A549 (cell line): ENCODE measurements at regions of chr17 and their contacts with region 1.

Region 1: DNA sequence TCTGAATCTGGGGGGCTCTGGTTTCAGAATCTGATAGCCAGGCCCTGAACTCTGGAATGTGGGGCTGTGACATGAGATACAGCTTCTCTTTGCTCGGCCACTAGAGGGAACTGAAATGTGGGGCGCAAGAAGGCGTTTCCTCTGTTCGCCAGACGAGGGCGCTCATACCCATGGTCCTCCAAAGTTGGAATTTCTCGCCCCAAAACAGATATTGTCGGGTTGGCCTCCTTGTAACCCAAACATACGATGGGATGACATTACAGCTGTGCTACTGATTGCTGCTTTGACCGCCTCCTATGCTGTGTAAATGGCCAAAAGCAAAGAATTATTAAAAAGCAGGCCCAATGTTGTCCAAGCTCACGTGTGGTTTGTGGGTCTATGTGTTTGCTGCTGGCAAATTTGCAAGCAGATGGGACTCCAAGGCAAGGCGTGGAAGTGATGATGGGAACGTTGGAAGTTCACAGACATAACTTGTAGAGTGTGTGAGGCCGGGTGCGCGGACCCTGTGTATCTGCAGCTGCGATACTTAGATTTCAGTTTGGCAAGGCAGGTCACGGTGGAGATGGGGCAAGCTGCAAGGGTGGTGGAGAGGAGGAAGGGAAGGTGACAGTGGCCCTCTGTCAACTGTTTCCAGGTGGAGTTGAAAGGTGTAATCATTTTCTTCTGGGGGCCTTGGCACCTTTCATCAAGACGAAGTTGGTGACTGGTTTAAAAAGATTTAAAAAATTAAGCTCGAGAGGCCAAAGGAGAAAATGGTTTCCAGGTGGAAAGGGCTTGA is 13.0 kb upstream of the MSI2 start:
- DNase-seq: peak; percentile 77 to 88
- ATAC-seq: peak; percentile 83 to 95
- H3K4me3 ChIP-seq: no peak overlapping the region
- H3K27ac ChIP-seq: peak overlapping the region; percentile 15 to 47; a peak in 3 of 6 replicates
- H3K4me1 ChIP-seq: peaks cover 8% of the 10 kb centered on the region; the same call in 1 of the 3 replicates
- CTCF ChIP-seq: peak; percentile 100
- EP300 ChIP-seq: no peak
- POLR2A ChIP-seq: no peak
- RAD21 ChIP-seq: peak; percentile 99

Region 2: GRCh38 chr17:56880133-56880532 is 363.2 kb before region 1 on chr17:
- CTCF ChIA-PET with region 1: no interaction called
- POLR2A ChIA-PET with region 1: no interaction called
- DNase-seq: no peak
- ATAC-seq: no peak; a peak in 1 of 6 replicates
- H3K4me3 ChIP-seq: no peak overlapping the region
- H3K27ac ChIP-seq: no peak overlapping the region
- H3K4me1 ChIP-seq: no peaks in the 10 kb centered on the region
- CTCF ChIP-seq: no peak
- EP300 ChIP-seq: no peak
- POLR2A ChIP-seq: no peak
- RAD21 ChIP-seq: no peak

Region 3: DNA sequence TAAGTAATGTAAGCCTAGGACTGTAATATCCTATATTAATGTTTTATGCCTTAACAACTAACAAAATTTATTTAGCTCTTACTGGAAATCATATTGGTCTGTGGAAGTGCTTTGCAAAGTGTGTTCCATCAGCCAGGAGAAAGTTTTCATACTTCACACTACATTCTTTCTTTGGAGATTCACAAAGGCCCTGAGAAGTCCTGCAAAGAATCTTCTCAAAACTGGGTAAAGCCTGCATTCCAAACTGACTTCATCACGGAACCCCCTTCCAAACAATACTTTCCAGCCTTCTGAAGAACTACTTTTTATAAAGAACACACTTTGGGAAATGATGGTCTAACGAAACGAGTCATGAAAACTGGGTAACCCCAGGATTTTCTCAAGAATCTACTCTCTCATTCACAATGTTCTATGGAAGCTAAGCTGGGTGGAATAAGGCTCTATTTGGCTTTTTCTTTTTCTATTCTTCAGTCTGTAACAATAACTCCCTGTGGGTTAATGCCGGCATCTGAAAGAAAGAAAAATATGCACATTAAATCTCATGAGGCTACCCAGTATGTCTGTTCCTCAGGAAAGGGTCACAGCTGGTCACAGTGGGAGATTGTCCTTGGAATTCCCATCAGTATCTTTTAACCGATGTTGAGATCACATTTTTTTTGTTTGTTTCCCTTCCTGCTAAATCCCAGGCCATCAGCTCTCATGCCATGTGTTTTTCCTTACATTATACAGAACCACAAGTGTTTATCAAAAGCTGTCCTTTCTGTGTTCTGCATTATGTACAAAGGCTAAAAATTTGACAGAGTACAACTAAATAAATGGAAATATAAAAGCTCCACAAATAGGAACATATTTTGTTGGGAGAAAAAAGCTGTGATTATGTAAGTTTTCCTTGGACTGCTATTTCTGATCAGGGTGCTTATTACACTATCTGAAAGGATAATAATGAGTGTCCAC is 171.1 kb before region 1 on chr17:
- CTCF ChIA-PET with region 1: no interaction called
- POLR2A ChIA-PET with region 1: no interaction called
- DNase-seq: no peak
- ATAC-seq: no peak
- H3K4me3 ChIP-seq: no peak overlapping the region
- H3K27ac ChIP-seq: no peak overlapping the region
- H3K4me1 ChIP-seq: no peaks in the 10 kb centered on the region
- CTCF ChIP-seq: no peak
- EP300 ChIP-seq: no peak
- POLR2A ChIP-seq: no peak
- RAD21 ChIP-seq: no peak

Region 4: DNA sequence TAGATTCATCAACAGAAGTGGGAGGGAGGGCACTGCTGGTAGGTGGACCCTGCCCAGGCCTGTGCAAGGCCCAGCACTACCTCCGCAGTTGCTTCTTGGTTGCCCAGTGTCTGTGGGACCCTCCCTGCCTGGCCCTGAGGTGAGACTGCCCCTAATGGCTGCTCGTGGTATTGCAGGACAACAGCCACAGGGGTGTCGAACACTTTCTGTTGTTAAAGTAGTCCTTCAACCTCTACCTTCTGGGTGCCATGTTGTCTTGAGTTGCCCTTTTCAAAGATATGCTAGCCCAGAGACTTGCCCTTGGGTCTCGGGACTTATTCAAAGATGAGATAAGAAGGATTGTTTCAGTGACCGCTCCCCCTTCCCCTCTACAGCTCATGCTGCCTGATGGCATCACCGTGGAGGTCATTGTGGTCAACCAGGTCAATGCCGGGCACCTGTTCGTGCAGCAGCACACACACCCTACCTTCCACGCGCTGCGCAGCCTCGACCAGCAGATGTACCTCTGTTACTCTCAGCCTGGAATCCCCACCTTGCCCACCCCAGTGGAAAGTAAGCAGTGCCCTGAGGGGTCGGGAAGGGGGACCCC is 129.2 kb before region 1 on chr17:
- CTCF ChIA-PET with region 1: no interaction called
- POLR2A ChIA-PET with region 1: no interaction called
- DNase-seq: peak; percentile 57 to 76
- ATAC-seq: peak; percentile 40 to 87; a peak in 3 of 6 replicates
- H3K4me3 ChIP-seq: no peak overlapping the region
- H3K27ac ChIP-seq: no peak overlapping the region
- H3K4me1 ChIP-seq: 0 out of 3 replicates have a peak, but pooled peaks cover under 1% of the 10 kb centered on the region
- CTCF ChIP-seq: peak; percentile 65
- EP300 ChIP-seq: no peak
- POLR2A ChIP-seq: no peak
- RAD21 ChIP-seq: peak; percentile 59 to 74

Region 5: GRCh38 chr17:57255776-57256681 is 12.7 kb after region 1 on chr17 and contains the start of gene MSI2:
- CTCF ChIA-PET with region 1: interaction called, 61 read pairs
- POLR2A ChIA-PET with region 1: no interaction called
- DNase-seq: peak; percentile 68 to 90
- ATAC-seq: peak; percentile 88 to 89
- H3K4me3 ChIP-seq: peak within 1 kb of the TSS; percentile 94
- H3K27ac ChIP-seq: peak within 1 kb of the TSS; percentile 94 to 95
- H3K4me1 ChIP-seq: peaks cover 26% of the 10 kb centered on the region; the same call in 2 of the 3 replicates
- CTCF ChIP-seq: no peak
- EP300 ChIP-seq: peak in 1 of 2 experiments; percentile 39; a peak in 3 of 5 replicates
- POLR2A ChIP-seq: peak; percentile 27; the same call in 1 of the 2 replicates
- RAD21 ChIP-seq: no peak
- polyA plus RNA-seq, gene MSI2: 44.4 and 47.5 TPM in 2 replicates

Region 6: DNA sequence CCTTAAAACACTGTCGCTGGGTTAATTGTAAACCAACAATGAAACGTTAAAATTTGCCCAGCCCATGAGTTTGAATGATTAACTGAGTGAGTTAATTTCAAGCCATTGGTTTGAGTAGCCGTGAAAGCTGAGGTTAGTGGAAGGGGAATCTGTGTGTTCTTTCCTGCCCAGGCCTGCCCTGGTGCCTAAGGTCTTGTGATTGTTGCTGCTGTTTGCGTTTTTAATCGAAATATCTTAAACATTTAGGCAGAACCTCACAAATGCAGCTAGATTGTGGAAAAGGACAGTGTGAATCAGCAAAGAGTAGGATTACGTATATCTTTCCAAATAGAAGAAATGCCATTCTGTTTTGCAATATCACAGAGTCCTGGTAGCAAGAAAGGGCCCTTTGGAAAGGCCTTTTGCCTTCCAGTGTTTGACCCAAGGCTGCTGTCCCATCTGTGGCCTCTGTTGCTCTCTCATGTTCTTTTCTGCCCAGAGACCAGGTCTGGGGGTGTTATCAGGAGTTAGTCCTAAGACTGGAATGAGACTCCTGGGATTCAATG is 126.7 kb after region 1 on chr17:
- CTCF ChIA-PET with region 1: interaction called, 33 read pairs
- POLR2A ChIA-PET with region 1: no interaction called
- DNase-seq: peak; percentile 81 to 91
- ATAC-seq: peak; percentile 82 to 83
- H3K4me3 ChIP-seq: no peak overlapping the region
- H3K27ac ChIP-seq: peak overlapping the region; percentile 88 to 91
- H3K4me1 ChIP-seq: peaks cover 80% of the 10 kb centered on the region
- CTCF ChIP-seq: no peak
- EP300 ChIP-seq: peak; percentile 92 to 93; a peak in 3 of 5 replicates
- POLR2A ChIP-seq: no peak
- RAD21 ChIP-seq: peak; percentile 31 to 67

Region 7: GRCh38 chr17:57440522-57441485 is 197.4 kb after region 1 on chr17:
- CTCF ChIA-PET with region 1: interaction called, 60 read pairs
- POLR2A ChIA-PET with region 1: no interaction called
- DNase-seq: peak; percentile 59 to 77
- ATAC-seq: peak; percentile 68 to 77
- H3K4me3 ChIP-seq: no peak overlapping the region
- H3K27ac ChIP-seq: peak overlapping the region; percentile 82 to 85
- H3K4me1 ChIP-seq: peaks cover 96% of the 10 kb centered on the region
- CTCF ChIP-seq: peak; percentile 47
- EP300 ChIP-seq: no peak
- POLR2A ChIP-seq: no peak
- RAD21 ChIP-seq: peak; percentile 59 to 60; a peak in 4 of 5 replicates

Region 8: GRCh38 chr17:57518587-57519581 is 275.5 kb after region 1 on chr17:
- CTCF ChIA-PET with region 1: interaction called, 16 read pairs
- POLR2A ChIA-PET with region 1: no interaction called
- DNase-seq: peak in 1 of 2 experiments; percentile 48
- ATAC-seq: peak in 1 of 2 experiments; percentile 57; a peak in 4 of 6 replicates
- H3K4me3 ChIP-seq: no peak overlapping the region
- H3K27ac ChIP-seq: peak overlapping the region; percentile 67 to 80
- H3K4me1 ChIP-seq: peaks cover 84% of the 10 kb centered on the region
- CTCF ChIP-seq: no peak
- EP300 ChIP-seq: no peak
- POLR2A ChIP-seq: no peak
- RAD21 ChIP-seq: no peak

Region 9: DNA sequence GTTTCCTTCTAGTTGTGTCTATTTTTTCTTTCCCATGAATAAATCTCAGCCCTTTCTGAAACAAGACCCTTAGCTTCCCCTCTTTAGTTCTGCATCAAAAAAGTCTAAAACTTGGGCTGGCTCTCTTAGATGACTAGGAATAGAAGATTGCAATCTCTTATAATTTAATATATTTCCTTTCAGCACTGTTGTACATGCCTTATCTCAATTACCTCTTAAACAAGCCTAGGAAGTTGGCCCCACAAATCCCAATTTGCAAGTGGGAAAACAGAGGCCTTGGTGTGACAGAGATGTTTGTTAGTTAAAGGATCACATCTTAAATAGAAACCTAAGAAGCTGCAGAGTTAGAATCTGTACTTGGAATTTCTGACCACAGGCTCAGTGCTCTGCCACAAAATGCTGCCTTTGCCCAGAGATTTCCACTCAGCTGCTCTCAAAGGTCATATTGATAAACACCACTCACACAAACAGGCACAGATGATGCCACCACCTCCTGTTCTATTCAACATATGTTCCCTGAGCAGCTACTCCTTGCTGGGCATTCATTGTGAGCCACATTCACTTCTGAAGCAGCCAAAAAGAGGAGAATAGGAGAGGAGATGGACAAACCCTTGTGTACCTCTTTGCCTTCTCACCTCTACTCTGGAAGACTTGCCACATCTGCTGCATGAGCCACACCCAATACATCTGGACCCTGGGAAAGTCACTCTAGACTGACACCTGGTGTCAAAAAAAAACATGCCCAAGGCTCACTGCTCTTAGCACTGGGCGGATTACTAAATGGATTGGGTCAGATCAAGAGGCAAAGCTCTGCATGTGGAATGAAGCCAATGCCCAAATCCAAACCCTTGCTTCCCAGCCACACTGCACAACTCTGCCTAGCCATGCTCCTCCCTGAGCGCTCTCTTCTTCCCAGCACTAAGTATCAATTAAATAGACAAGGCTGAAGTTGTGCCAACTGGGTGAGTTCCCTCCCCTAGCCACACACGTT is 496.3 kb after region 1 on chr17:
- CTCF ChIA-PET with region 1: interaction called, 108 read pairs
- POLR2A ChIA-PET with region 1: no interaction called
- DNase-seq: peak; percentile 53 to 54
- ATAC-seq: peak; percentile 82 to 91
- H3K4me3 ChIP-seq: no peak overlapping the region
- H3K27ac ChIP-seq: no peak overlapping the region
- H3K4me1 ChIP-seq: peaks cover 6% of the 10 kb centered on the region; the same call in 1 of the 3 replicates
- CTCF ChIP-seq: peak; percentile 63
- EP300 ChIP-seq: no peak
- POLR2A ChIP-seq: no peak
- RAD21 ChIP-seq: peak; percentile 61 to 65